PC-3 (cell line): ENCODE measurements at regions of chr3 and their contacts with region 1.

Region 1: GRCh38 chr3:43190666-43191065 is 84.8 kb upstream of the POMGNT2 start:
- DNase-seq: peak; percentile 96
- ATAC-seq: peak; percentile 82
- H3K4me3 ChIP-seq: peak overlapping the region; percentile 23; the same call in 1 of the 2 replicates
- H3K27ac ChIP-seq: peak overlapping the region; percentile 96
- H3K4me1 ChIP-seq: peaks cover 39% of the 10 kb centered on the region
- H3K27me3 ChIP-seq: no peaks in the 10 kb centered on the region
- CTCF ChIP-seq: no peak

Region 2: DNA sequence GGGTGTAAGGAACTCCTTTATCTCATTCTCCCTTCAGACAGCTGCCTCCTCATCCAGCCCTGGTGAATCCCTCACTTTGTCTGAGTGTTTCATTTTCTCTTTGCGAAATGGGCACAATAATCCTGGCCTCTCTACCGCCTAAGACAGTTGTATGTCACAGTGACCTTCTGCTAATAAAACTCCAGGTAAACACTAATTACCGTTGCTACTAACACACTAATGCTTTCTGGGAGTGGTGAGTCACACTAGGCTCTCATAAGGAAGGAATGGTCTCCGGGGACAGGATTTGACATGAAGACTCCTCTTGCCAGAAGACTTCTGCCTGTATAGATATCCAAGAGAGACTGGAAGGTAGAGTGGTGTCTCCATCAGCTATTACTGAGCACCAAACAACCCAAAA is 23.9 kb after region 1 on chr3:
- CTCF ChIA-PET with region 1: no interaction called
- POLR2A ChIA-PET with region 1: no interaction called
- intact Hi-C with region 1: loop called (anchors 1 kb)
- DNase-seq: peak; percentile 91
- ATAC-seq: peak; percentile 91
- H3K4me3 ChIP-seq: no peak overlapping the region
- H3K27ac ChIP-seq: peak overlapping the region; percentile 71
- H3K4me1 ChIP-seq: peaks cover 30% of the 10 kb centered on the region
- H3K27me3 ChIP-seq: no peaks in the 10 kb centered on the region
- CTCF ChIP-seq: no peak

Region 3: DNA sequence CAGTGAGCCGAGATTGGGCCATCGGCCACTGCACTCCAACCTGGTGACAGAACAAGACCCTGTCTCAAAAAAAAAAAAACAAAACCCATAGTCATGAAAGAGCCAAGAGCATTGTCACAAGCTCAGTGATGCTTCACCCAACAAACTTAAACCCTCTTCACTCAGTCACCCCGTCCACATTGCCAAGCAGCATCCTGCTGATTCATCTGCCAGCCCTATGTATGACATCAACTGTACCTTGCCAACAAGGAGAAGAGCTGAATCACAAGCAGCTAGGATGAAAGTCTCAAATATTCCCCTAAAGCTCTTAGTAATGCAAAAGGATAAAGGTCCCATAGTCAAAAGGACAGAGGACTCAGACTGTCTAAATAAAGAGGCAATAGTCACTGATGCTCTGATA is 341.2 kb after region 1 on chr3:
- CTCF ChIA-PET with region 1: no interaction called
- POLR2A ChIA-PET with region 1: interaction called, 12 read pairs
- intact Hi-C with region 1: no loop called
- DNase-seq: peak; percentile 83
- ATAC-seq: peak; percentile 98
- H3K4me3 ChIP-seq: no peak overlapping the region
- H3K27ac ChIP-seq: peak overlapping the region; percentile 19
- H3K4me1 ChIP-seq: peaks cover 4% of the 10 kb centered on the region
- H3K27me3 ChIP-seq: no peaks in the 10 kb centered on the region
- CTCF ChIP-seq: no peak